PC-3 (cell line): ENCODE measurements at regions of chr2 and their contacts with region 1.

Region 1: DNA sequence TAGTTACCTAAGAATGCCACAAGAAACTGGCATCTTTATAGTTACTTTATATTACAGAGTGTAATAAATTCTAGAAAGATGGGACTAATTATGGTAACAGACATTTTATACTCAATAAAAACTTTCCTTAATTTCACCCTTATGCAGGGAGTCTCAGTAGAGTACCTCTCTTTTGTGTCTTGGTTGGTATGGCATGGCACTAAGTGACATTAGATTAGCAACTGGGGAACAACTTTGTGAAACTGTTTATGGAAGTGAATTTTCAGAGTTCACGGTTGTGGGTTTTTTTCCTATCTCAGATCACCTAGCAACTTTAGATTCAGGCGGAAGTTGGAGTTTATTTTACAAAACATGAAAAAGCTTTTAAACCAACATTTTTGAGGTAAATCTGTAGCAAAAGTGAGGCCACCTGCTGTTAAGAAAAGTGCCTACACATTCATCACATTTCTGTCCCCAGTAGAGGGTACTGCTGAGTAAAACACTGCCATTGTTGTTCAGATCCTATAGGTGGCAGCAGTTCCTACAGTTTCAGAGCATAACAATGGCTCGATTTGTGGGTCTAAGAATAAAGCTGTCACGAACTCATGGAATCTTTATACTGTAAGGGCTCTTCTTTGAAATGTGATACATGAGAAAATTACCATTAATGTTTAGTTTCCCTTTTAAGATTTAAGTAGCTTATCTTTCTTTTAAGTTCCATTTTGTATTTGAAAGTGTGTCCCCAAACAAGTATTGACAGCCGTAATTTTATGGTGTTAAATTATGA is 117.6 kb downstream of the CAMKMT start:
- DNase-seq: peak; percentile 88
- ATAC-seq: peak; percentile 95
- H3K4me3 ChIP-seq: no peak overlapping the region
- H3K27ac ChIP-seq: no peak overlapping the region
- H3K4me1 ChIP-seq: no peaks in the 10 kb centered on the region
- H3K27me3 ChIP-seq: no peaks in the 10 kb centered on the region
- CTCF ChIP-seq: peak; percentile 100

Region 2: DNA sequence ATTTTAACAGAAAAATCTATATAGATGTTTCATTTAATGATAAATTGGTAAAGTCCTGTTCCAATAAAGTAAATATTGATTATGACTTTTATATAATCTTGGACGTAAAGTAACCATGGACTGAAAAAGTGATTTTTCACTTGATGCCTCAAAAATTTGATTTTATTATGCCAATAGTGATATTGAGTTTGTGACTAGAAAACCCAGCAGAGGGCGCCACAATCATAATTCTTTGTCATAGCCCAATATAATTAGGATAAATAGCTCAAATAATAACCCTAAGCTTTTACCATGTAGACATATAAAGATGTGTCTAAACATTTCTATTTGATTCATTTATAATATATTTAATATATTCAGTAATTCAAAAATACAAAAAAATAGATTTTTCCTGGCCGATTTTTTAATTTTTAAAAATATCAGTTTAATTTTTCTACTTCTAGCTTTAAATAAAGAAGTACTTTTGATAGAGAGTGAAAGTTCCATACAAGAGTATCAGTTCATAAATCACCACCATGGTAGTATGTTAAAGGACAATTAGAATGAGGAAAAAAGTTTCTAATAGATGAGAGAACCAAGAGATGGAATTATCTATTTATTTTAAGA is 86.9 kb before region 1 on chr2:
- CTCF ChIA-PET with region 1: interaction called, 79 read pairs
- POLR2A ChIA-PET with region 1: no interaction called
- intact Hi-C with region 1: loop called (anchors 1 kb)
- DNase-seq: peak; percentile 73
- ATAC-seq: no peak
- H3K4me3 ChIP-seq: no peak overlapping the region
- H3K27ac ChIP-seq: no peak overlapping the region
- H3K4me1 ChIP-seq: no peaks in the 10 kb centered on the region
- H3K27me3 ChIP-seq: no peaks in the 10 kb centered on the region
- CTCF ChIP-seq: peak; percentile 72

Region 3: DNA sequence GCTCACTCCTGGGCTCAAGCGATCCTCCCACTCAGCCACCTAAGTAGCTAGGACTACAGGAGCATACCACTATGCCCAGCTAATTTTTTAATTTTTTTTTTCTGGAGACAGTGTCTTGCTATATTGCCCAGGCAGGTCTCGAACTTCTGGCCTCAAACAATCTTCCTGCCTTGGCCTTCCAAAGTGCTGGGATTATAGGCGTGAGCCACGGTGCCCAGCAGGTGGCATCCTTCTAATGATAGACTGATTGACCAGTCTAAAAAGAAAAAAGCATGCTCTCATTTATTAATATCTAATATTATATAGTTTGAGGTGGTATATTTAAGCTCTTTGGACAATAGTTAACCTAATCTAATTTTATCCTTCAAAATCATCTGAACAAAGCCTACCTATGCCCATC is 81.0 kb after region 1 on chr2:
- CTCF ChIA-PET with region 1: interaction called, 10 read pairs
- POLR2A ChIA-PET with region 1: no interaction called
- intact Hi-C with region 1: no loop called
- DNase-seq: peak; percentile 58
- ATAC-seq: no peak
- H3K4me3 ChIP-seq: no peak overlapping the region
- H3K27ac ChIP-seq: no peak overlapping the region
- H3K4me1 ChIP-seq: peaks cover 10% of the 10 kb centered on the region
- H3K27me3 ChIP-seq: no peaks in the 10 kb centered on the region
- CTCF ChIP-seq: peak; percentile 67

Region 4: DNA sequence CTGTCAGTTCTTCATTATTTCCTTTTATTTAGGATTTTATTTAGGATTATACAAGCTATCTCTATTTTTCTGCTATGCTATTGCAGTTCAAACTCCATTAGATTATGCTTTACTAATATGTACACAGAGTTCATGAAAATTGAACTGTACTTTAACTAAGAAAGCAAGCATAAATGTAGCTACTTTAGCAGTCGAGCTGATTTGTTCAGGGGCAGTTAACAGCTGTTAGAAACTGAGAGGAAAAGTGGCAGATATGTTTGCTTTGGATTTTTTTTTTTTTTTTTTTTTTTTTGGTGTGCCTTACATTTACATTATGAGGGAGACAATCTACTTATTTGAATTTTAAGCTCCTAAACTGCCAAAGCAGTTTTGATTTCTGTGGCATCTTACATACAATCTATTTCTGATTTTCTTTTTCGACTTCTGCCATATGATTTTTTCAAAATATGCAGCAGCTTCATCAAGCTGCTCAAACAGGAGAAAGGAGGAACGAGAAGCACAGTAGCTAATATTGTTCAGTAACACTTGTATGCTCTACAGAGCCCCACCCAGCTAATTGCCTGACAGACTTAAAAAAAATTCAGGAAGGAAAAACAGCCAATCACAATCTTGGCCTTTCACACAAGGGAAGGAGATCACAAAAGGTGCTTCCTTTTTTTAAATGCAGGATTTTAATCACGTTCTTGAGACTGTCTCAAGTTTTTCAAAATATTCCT is 228.8 kb after region 1 on chr2:
- CTCF ChIA-PET with region 1: interaction called, 8 read pairs
- POLR2A ChIA-PET with region 1: interaction called, 7 read pairs
- intact Hi-C with region 1: loop called (anchors 1 kb)
- DNase-seq: peak; percentile 46
- ATAC-seq: peak; percentile 51; the same call in 1 of the 2 replicates
- H3K4me3 ChIP-seq: peak overlapping the region; percentile 19; the same call in 1 of the 2 replicates
- H3K27ac ChIP-seq: no peak overlapping the region
- H3K4me1 ChIP-seq: peaks cover 14% of the 10 kb centered on the region
- H3K27me3 ChIP-seq: no peaks in the 10 kb centered on the region
- CTCF ChIP-seq: no peak

Region 5: GRCh38 chr2:44715671-44716081 is 236.4 kb after region 1 on chr2:
- CTCF ChIA-PET with region 1: interaction called, 13 read pairs
- POLR2A ChIA-PET with region 1: interaction called, 3 read pairs
- intact Hi-C with region 1: loop called (anchors 1 kb)
- DNase-seq: peak; percentile 72
- ATAC-seq: peak; percentile 87
- H3K4me3 ChIP-seq: no peak overlapping the region
- H3K27ac ChIP-seq: no peak overlapping the region
- H3K4me1 ChIP-seq: no peaks in the 10 kb centered on the region
- H3K27me3 ChIP-seq: no peaks in the 10 kb centered on the region
- CTCF ChIP-seq: peak; percentile 82

Region 6: DNA sequence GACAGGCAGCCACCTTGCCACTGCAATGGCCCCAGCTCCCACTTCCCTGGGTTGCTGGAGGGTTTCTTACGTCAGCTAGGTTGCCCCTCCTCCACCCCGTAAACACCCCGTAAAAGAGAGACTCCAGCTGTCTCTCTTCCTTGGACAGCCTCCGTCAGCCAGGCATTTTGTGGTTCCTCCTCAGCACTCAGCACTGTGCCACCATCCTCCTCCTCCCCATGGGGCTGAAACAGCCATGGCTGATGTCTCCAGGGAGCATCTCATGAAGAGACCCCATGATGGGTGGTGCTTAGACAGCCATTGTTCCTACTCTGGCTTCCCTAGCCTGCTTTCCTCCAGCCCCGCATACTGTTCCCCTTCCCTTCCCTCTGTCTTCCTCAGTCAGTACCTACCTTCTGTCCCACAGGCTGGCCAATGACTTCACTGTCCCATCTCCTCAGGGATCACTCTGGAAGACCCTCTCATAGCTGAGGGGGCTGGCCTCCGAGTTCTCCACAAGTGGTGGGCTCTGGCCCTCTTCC is 318.9 kb after region 1 on chr2:
- CTCF ChIA-PET with region 1: no interaction called
- POLR2A ChIA-PET with region 1: no interaction called
- intact Hi-C with region 1: loop called (anchors 5 kb)
- DNase-seq: no peak
- ATAC-seq: no peak
- H3K4me3 ChIP-seq: no peak overlapping the region
- H3K27ac ChIP-seq: no peak overlapping the region
- H3K4me1 ChIP-seq: no peaks in the 10 kb centered on the region
- H3K27me3 ChIP-seq: peaks cover 44% of the 10 kb centered on the region
- CTCF ChIP-seq: no peak

Region 7: DNA sequence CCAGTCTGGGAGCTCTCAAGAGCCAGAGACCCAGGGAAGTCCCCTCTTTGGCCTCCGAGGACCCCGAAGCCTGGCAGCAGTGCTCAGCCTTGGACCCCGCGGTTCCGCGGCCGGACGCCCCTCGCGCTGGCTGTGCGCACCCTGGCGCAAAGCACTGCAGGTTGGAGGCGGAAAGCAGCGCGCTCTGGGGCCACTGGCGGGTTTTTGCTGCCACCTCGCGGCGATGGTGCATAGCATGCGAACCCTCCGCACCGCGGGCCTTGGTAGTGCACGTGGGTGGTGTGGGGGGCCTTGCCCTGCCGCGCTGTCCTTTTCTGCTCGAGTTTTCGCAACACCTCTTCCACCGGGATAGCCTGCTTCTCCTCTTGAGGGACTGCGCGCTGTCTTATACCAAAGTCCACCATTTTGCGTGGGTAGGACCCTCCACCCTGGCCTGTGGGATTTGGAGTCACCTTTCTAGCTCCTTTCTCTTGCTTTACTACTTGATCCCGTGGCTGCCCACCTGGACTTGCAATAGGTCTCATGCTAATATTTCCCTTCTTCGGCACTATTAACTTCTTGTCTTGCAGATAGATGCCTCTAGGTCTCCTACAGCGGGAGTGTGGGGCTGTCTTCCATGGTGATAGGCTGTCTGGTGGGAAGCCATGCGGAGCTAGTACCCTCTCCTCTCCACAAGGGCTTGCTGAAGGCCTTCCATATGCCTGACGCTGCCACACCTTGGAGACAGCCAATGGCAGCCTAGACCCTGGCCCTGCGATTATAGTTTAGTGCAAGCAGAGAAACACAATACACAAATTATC is 476.5 kb after region 1 on chr2:
- CTCF ChIA-PET with region 1: interaction called, 14 read pairs
- POLR2A ChIA-PET with region 1: no interaction called
- intact Hi-C with region 1: loop called (anchors 1 kb)
- DNase-seq: peak; percentile 76
- ATAC-seq: peak; percentile 76
- H3K4me3 ChIP-seq: peak overlapping the region; percentile 68
- H3K27ac ChIP-seq: no peak overlapping the region
- H3K4me1 ChIP-seq: peaks cover 43% of the 10 kb centered on the region
- H3K27me3 ChIP-seq: no peaks in the 10 kb centered on the region
- CTCF ChIP-seq: peak; percentile 86